ENCODE measurements at regions of chr7 and their contacts with region 1.

Region 1: GRCh38 chr7:155298834-155299534 is 1.3 kb downstream of the INSIG1 start:
- DNase-seq: peak; percentile 97 to 98
- ATAC-seq: peak; percentile 90
- H3K4me3 ChIP-seq: peak overlapping the region; percentile 30 to 68
- H3K27ac ChIP-seq: peak overlapping the region in 1 of 2 donors; percentile 20
- H3K4me1 ChIP-seq: no peaks in the 10 kb centered on the region
- H3K27me3 ChIP-seq: no peaks in the 10 kb centered on the region

Region 2: DNA sequence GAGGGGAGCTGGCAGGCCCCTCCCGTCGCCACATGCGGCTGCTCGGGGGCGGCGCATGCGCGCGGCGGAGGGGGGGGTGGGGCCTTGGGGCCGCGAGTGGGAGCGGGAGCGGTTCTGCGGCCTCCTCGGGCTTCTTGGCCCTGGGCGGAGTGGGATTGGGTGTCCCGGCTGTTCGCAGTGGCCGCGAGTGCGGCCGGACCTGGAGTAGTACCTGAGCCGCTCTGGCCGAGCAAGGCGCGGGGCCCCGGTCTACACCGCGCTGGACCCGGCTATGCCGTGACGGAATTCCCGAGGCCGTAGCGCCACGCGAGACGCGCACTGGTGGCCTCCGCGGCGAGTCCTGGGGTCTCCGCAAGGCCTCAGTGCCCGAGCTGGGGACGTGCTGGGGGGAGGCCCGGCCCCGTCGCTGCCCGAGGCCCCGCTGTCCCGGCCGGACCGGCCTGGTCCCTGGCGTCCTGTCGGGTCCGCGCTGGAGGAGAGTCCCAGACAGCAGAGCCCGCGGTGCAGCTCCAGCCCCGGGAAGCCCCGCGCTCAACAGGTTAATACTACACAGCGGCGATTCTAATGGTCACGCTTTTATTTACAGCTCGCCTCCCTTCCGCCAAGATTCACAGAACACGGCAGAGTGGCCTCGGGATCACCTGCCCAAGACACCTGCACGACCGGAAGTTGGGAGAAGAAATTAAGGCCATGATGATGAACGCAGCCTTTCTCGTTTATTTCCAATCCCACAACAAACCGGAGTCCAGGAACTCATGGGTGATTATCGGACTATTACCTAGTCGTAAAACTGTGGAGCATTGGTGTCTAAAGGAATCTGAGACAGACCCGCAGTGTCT is 295.4 kb before region 1 on chr7:
- intact Hi-C with region 1: loop called (anchors 2 to 10 kb)
- DNase-seq: peak; percentile 85 to 91
- ATAC-seq: peak; percentile 98
- H3K4me3 ChIP-seq: peak overlapping the region; percentile 95 to 96
- H3K27ac ChIP-seq: peak overlapping the region in 1 of 2 donors; percentile 43
- H3K4me1 ChIP-seq: no peaks in the 10 kb centered on the region
- H3K27me3 ChIP-seq: no peaks in the 10 kb centered on the region

Region 3: DNA sequence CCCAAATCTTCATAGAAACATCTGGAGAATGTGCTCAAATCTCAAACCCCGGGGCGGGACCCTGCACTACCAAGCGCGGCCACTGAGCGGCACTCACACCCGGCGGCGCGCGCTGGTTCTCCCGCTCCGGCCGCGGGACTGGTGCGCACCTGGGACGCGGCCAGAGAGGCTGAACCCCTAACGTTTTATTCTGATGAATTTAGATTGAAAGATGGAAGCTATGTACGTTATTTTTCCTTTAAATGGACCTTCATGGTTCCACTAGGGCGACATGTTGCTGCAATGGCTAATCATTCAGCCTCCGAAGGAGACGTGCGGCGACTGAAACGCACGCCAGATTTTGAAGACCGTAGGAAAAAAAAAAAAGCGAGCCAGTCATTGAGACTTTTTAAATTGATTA is 108.3 kb before region 1 on chr7:
- intact Hi-C with region 1: no loop called
- DNase-seq: peak in 1 of 2 donors; percentile 89
- ATAC-seq: peak; percentile 78
- H3K4me3 ChIP-seq: no peak overlapping the region
- H3K27ac ChIP-seq: no peak overlapping the region
- H3K4me1 ChIP-seq: no peaks in the 10 kb centered on the region
- H3K27me3 ChIP-seq: no peaks in the 10 kb centered on the region

Region 4: GRCh38 chr7:155257482-155258225 is 41.3 kb before region 1 on chr7:
- intact Hi-C with region 1: loop called (anchors 2 to 5 kb)
- DNase-seq: peak; percentile 85 to 92
- ATAC-seq: peak; percentile 89
- H3K4me3 ChIP-seq: no peak overlapping the region
- H3K27ac ChIP-seq: peak overlapping the region in 1 of 2 donors; percentile 0
- H3K4me1 ChIP-seq: no peaks in the 10 kb centered on the region
- H3K27me3 ChIP-seq: no peaks in the 10 kb centered on the region

Region 5: DNA sequence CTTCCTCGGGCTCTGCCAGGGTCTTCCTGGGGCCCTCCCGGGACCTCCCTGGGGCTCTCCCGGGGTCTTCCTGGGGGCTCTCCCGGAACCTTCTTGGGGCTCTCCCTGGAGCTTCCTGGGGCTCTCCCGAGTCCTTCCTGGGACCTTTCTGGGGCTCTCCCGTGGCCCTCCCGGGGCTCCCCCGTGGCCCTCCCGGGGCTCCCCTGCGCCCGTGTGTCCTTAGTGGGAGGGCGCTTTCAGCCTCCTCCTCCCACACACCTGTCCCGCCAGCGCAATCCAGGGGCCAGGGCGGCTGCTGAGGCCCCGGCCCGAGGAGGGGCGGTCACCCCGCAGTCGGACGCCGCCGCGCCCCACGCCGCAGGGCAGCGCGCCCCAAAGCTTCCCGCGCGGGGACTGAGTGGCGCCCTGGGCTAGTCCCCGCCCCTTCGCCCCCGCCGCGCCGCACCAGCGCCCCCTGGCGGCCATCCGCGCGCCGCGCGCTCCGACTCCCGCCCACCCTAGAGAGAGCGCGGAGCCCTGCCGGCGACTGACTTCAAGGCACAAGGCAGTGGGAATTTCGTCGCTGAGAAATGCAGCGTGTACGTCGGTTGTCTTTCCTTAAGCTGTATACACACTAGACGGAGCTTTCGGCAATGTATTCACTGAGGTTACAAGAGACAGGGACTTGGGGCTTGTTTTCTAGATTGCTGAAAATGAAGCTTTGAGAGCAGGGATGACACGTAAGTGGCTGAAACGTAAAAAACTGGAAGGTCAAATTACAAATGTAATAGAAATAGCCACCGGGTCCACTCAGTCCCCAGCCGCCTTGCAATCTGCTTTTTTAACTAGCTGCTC is 45.8 kb after region 1 on chr7:
- intact Hi-C with region 1: no loop called
- DNase-seq: peak; percentile 78 to 93
- ATAC-seq: peak; percentile 94
- H3K4me3 ChIP-seq: no peak overlapping the region
- H3K27ac ChIP-seq: no peak overlapping the region
- H3K4me1 ChIP-seq: no peaks in the 10 kb centered on the region
- H3K27me3 ChIP-seq: no peaks in the 10 kb centered on the region

Region 6: DNA sequence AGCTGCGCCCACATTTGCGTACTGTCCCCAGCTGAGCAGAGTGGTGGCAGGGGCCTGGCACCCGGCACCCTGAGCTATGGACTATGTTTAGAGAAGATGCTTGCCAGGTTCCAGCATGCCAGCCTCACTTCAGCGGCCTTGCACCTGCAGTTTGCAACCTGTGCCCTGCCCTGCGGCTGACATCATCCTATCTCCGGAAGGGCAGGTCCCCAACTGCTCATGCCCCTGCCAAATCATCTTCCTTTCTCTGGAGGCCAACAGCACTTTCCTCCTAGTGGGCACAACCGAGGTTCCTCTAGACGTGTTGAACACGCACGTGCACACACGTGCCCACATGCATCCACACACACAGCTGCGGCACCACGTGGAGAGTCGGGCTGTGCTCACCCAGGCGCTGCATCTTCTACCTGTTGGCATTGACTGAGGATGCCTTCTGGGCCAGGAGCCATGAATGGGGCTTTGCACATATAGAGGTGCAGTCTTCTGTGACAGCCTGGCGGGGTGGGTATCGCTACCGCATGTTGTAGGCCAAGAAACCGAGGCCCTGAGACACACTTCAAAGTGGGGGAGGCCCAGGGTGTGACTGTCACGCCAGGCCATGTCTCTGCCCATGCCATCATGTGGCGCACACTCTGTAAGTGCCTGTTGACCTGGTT is 222.9 kb after region 1 on chr7:
- intact Hi-C with region 1: no loop called
- DNase-seq: no peak
- ATAC-seq: no peak
- H3K4me3 ChIP-seq: no peak overlapping the region
- H3K27ac ChIP-seq: no peak overlapping the region
- H3K4me1 ChIP-seq: no peaks in the 10 kb centered on the region
- H3K27me3 ChIP-seq: no peaks in the 10 kb centered on the region

Region 7: DNA sequence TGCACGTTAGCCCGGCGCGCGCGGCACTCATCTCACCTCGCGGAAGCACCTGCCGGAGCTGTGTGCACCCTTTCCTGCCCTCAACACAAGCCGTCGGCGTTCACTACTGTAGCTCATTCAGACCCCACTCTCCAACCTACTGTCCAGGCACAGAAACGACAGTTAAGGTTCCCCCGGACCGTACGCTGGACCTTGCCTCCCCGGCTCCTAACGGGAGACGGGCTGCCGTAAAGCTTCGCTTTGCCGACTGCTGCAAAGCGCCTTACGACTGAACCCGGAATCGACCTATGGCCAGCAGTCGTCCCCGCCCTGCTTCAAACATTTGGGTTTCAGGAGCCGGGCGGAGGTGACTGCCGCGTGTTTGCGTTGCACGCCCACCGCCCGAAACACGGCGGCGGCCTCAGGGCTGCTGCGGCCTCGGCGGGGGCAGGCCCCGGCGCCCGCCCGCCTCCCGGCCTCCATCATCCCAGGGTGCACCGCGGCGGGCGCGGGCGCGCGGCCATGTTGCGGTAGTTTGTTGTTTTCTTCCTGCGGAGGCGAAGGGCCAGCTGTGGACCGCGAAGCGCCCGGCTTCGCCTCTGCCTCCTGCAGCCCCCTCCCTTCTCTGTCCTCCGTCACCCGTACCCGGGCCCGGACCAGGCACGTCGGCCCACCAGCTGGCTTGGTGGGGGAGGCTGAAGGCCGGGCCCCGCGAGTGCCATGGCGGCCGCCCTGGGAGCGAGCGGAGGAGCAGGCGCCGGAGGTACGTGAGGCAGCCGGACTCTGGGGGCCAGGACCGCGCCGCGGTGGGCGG is 345.4 kb after region 1 on chr7 and contains the start of gene RBM33:
- intact Hi-C with region 1: loop called in 1 of 2 experiments (anchors 5 kb)
- DNase-seq: peak; percentile 82 to 92
- ATAC-seq: peak; percentile 96
- H3K4me3 ChIP-seq: peak within 1 kb of the TSS; percentile 93 to 99
- H3K27ac ChIP-seq: peak within 1 kb of the TSS; percentile 53 to 94
- H3K4me1 ChIP-seq: no peaks in the 10 kb centered on the region
- H3K27me3 ChIP-seq: no peaks in the 10 kb centered on the region
- total RNA-seq, gene RBM33: 66.5 to 80.0 TPM

Region 8: GRCh38 chr7:155665957-155666287 is 366.9 kb after region 1 on chr7:
- intact Hi-C with region 1: no loop called
- DNase-seq: no peak
- ATAC-seq: no peak
- H3K4me3 ChIP-seq: no peak overlapping the region
- H3K27ac ChIP-seq: no peak overlapping the region
- H3K4me1 ChIP-seq: no peaks in the 10 kb centered on the region
- H3K27me3 ChIP-seq: no peaks in the 10 kb centered on the region